Posterior vena cava (tissue), 2 donors: ENCODE measurements at regions of chr11 and their contacts with region 1.

Region 1: DNA sequence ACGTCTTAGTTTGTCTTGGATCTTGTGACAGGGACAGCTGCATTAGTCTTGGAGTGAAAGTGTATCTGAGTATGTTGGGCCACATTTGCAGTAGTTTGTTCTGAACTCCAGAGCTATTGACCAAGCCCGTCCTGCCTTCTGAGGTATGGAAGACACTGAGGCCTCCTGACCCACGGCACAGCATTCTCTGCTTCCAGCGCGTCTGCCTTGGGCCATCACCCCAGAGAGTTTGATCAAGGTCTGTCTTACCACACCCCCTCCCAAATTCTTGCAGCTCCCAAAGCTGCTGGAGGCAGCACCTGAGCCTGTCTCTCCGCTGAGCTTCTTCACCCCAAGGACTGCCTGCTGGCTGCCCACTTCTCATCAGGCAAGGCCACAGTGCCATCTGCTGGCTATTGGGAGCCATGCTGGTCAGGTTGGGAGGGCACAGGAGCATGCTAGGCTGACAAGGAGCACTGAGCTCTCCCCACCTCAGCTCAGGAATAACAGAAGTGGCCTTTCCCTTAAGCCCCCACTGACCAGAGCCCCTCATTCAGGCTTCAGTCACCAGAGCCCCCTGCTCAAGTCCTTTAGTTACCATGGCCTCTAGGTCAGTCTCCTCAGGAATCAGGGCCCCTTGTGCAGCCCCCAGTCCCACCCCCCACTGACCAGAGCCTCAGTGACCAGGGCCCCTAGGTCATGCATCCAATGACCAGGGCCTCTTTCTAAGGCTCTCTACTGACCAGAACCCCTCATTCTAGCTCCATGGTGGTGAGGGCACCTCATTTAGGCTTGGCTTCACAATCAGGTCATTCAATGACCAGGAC is 27.2 kb upstream of the SMPD1 start:
- DNase-seq: peak; percentile 91

Region 2: GRCh38 chr11:5258543-5259262 is 1104.4 kb before region 1 on chr11:
- intact Hi-C with region 1: no loop called
- DNase-seq: no peak

Region 3: GRCh38 chr11:6022956-6023355 is 340.1 kb before region 1 on chr11:
- intact Hi-C with region 1: loop called (anchors 10 kb)
- DNase-seq: no peak

Region 4: GRCh38 chr11:6251120-6251733 is 111.8 kb before region 1 on chr11:
- intact Hi-C with region 1: loop called in 1 of 2 experiments (anchors 10 kb)
- DNase-seq: peak; percentile 82

Region 5: DNA sequence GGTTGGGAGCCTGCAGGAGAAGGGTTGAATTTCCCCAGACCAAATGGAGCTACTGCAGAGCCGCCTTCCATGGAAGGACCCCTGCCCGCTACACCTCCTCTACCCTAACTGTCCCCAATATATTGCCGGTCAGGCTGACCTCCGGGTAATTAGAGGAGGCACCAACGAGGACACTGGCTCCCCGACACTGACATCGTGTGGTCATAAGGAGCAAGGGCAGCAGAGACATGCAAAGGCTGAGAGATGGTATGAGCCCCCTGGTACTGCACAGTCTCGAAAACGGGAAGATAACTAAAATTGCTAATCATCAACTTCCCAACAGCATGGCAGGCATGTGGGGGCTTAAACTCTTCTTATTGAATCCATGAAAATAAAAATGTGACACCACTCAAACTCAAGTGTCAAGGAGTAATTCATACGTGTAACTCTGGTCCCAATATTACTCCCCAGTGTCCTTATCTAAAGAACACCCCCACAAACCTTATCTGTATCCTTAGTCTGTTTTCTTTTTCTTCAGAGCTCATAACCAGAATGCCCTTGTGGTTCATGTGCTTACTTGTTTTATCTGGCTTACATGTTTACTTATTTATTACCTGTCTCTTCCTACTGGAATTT is 47.2 kb before region 1 on chr11:
- intact Hi-C with region 1: loop called in 1 of 2 experiments (anchors 5 kb)
- DNase-seq: peak; percentile 87

Region 6: GRCh38 chr11:6389921-6390724 is 27.0 kb after region 1 on chr11 and contains the start of gene SMPD1:
- intact Hi-C with region 1: no loop called
- DNase-seq: peak; percentile 98
- total RNA-seq, gene SMPD1: 35.4 to 51.6 TPM

Region 7: GRCh38 chr11:6402561-6402981 is 39.5 kb after region 1 on chr11:
- intact Hi-C with region 1: no loop called
- DNase-seq: no peak

Region 8: DNA sequence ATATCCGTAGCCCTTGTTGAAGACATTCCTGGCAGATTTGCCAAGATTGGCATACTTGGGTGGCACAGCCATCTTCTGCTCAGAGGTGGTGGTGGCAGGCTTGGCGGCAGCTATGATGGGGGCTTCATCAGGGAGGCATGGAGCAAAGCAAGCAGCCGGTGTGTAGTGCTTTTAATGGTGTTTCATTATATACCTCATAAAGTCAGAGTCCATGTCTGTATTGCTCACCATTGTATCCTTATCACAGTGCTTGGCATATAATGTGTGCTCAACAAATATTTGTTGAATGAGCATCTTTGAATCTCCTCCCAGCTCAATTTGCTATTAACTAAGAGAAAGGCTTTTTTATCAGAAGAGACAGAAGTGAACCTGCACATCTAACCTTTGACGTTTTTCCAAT is 126.2 kb after region 1 on chr11:
- intact Hi-C with region 1: no loop called
- DNase-seq: no peak